HepG2 (cell line): ENCODE measurements at regions of chr6 and their contacts with region 1.

Region 1: GRCh38 chr6:168713834-168714233 is 272.9 kb downstream of the SMOC2 start:
- DNase-seq: peak; percentile 47
- ATAC-seq: peak; percentile 91
- H3K4me3 ChIP-seq: no peak overlapping the region
- H3K27ac ChIP-seq: no peak overlapping the region
- H3K4me1 ChIP-seq: no peaks in the 10 kb centered on the region
- H3K27me3 ChIP-seq: peaks cover 3 to 23% of the 10 kb centered on the region in 2 experiments; a peak in 3 of 5 replicates
- CTCF ChIP-seq: peak; percentile 28; the same call in 1 of the 2 replicates
- EP300 ChIP-seq: no peak
- POLR2A ChIP-seq: no peak
- RAD21 ChIP-seq: peak; percentile 41; the same call in 1 of the 2 replicates

Region 2: GRCh38 chr6:168370310-168370991 is 343.4 kb before region 1 on chr6:
- CTCF ChIA-PET with region 1: no interaction called
- POLR2A ChIA-PET with region 1: no interaction called
- in situ Hi-C with region 1: no loop called
- intact Hi-C with region 1: loop called (anchors 5 kb)
- DNase-seq: peak; percentile 39
- ATAC-seq: peak; percentile 95
- H3K4me3 ChIP-seq: no peak overlapping the region
- H3K27ac ChIP-seq: no peak overlapping the region
- H3K4me1 ChIP-seq: peaks cover 5% of the 10 kb centered on the region; the same call in 1 of the 2 replicates
- H3K27me3 ChIP-seq: peaks cover 7 to 91% of the 10 kb centered on the region in 2 experiments
- CTCF ChIP-seq: peak; percentile 97
- EP300 ChIP-seq: no peak
- POLR2A ChIP-seq: no peak
- RAD21 ChIP-seq: peak; percentile 97

Region 3: GRCh38 chr6:168648240-168649125 is 65.4 kb before region 1 on chr6:
- CTCF ChIA-PET with region 1: no interaction called
- POLR2A ChIA-PET with region 1: no interaction called
- in situ Hi-C with region 1: no loop called
- intact Hi-C with region 1: no loop called
- DNase-seq: no peak
- ATAC-seq: no peak; the same call in 1 of the 3 replicates
- H3K4me3 ChIP-seq: no peak overlapping the region
- H3K27ac ChIP-seq: no peak overlapping the region
- H3K4me1 ChIP-seq: no peaks in the 10 kb centered on the region
- H3K27me3 ChIP-seq: peaks cover 18 to 82% of the 10 kb centered on the region in 2 experiments
- CTCF ChIP-seq: no peak
- EP300 ChIP-seq: no peak
- POLR2A ChIP-seq: no peak
- RAD21 ChIP-seq: no peak